RWPE1 (cell line): ENCODE measurements at regions of chr1 and their contacts with region 1.

Region 1: DNA sequence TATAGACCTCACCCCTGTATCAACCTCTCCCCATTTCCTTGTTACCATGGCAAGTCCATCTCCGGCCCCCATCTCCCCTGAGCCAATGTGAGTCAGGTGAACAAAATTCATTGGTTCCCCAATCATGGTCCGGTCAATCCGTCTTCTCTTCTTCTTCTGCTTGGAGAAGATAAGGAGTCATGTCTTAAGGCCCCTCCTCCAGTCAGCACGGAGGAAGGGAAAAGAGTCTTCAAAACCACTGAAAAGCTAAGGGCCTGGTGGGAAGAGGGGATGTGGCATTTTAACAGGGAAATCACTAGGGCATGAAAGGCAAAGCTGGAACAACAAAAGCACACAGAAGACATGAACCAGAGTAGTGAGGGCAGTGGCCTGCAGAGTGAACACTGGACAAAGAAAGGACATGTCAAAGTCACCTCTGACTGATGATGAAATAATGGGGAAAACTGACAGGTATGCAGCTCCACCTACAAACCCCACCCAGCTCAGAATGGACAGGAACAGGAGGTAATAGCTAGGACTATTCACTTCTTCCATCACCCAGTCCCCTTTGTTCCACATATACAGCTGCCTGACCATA is 4.4 kb downstream of the CDC42SE1 start:
- DNase-seq: no peak
- H3K27ac ChIP-seq: peak overlapping the region; percentile 56
- CTCF ChIP-seq: no peak

Region 2: DNA sequence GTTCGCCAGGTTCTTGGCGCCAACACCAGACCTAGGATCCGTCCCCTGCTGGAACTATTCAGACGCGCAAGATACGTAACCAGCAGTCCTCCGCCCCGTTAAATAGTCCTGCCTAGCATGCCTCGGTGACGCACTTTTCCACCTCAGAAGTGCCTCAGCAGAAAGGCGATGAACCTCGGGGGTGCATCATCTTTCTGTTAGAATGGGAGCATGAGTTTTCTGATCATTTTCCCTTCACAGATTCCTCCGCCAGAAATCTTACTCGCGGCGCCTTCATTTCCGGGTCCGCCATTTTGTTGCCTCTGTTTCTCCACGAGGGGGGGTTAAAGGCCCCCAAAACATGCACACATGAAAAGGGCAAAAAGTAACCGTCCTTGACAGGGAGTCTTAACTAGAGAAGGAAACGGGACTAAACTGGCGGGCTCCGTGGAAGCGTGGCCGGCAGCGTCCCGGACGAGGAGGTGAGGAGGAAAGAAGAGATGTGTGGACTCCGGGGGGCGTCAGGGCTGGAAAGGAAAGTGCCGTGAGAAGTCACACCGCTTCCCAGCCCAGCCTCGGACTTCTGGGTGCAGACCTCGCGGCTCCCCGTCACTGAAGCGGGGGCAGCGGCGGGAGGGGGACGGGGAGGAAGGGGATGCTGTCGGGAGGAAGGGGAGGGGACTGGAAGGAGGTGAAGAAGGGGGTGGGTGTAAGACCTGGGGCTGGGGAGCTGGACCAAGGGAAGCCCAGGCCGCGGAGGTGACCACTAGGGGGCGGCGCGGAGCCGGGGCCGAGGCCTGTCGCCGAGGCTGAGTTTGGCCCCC is 15.6 kb after region 1 on chr1 and contains the start of gene GABPB2:
- CTCF ChIA-PET with region 1: interaction called, 11 read pairs
- POLR2A ChIA-PET with region 1: no interaction called
- DNase-seq: peak; percentile 89
- H3K27ac ChIP-seq: peak within 1 kb of the TSS; percentile 99
- CTCF ChIP-seq: peak; percentile 93

Region 3: GRCh38 chr1:151106894-151107293 is 51.8 kb after region 1 on chr1:
- CTCF ChIA-PET with region 1: no interaction called
- POLR2A ChIA-PET with region 1: no interaction called
- DNase-seq: peak; percentile 70
- H3K27ac ChIP-seq: no peak overlapping the region
- CTCF ChIP-seq: no peak